ENCODE measurements at regions of chr19 and their contacts with region 1.

Region 1: DNA sequence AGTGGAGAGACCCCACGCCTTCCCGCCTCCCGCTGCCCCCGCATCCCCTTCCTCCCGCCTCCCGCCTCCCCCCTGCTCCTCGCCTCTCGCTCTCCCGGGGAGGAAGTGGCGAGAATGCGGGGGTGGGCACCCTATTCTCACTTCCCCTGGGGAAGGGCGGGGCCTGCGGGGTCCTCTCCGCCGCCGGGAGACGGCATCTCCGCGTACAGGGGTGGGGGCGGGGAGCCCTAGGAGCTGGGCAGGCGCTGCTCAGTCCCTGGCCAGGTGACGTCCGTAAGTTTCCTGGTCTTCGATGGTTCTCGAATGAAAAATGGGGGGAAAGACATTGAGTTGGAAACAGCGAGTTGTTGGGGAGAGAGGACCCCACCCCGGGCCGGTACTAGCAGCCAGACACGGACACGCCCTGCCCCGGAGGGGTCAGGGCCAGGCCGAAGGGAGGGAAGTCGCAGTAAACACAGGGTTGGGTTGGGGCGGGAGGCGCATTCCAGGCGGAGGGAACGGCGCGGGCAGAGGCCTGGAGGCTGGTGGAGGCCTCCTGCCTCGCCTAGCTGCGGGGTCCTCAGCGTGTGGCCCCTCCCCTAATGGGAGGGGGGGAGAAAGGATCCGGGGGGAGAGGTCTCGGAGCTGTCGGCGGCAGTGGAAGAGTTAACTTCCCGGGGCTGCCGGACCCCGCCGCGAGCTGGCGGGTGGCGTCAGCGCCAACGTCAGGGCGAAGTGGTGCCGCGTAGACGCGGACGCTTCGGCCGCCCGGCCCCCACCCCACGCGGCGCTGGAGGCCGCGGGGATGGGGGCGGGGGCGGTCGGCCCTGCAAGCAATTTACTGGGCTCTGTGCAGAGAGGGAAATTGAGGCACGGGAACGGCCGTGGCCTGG is 10.4 kb upstream of the JUND start:
- DNase-seq: peak; percentile 73
- ATAC-seq: peak; percentile 14
- H3K4me3 Mint-ChIP-seq: peak overlapping the region; percentile 83
- H3K27ac Mint-ChIP-seq: peak overlapping the region; percentile 99
- H3K4me1 Mint-ChIP-seq: peaks cover 48% of the 10 kb centered on the region
- H3K27me3 Mint-ChIP-seq: peaks cover 3% of the 10 kb centered on the region; the same call in 1 of the 2 replicates
- CTCF ChIP-seq: no peak

Region 2: GRCh38 chr19:18224525-18225354 is 67.1 kb before region 1 on chr19:
- CTCF ChIA-PET with region 1: interaction called, 5 read pairs
- POLR2A ChIA-PET with region 1: interaction called, 10 read pairs
- DNase-seq: peak; percentile 100
- ATAC-seq: peak; percentile 91
- H3K4me3 Mint-ChIP-seq: peak overlapping the region; percentile 92
- H3K27ac Mint-ChIP-seq: peak overlapping the region; percentile 100
- H3K4me1 Mint-ChIP-seq: peaks cover 30% of the 10 kb centered on the region
- H3K27me3 Mint-ChIP-seq: peaks cover 42% of the 10 kb centered on the region
- CTCF ChIP-seq: no peak

Region 3: DNA sequence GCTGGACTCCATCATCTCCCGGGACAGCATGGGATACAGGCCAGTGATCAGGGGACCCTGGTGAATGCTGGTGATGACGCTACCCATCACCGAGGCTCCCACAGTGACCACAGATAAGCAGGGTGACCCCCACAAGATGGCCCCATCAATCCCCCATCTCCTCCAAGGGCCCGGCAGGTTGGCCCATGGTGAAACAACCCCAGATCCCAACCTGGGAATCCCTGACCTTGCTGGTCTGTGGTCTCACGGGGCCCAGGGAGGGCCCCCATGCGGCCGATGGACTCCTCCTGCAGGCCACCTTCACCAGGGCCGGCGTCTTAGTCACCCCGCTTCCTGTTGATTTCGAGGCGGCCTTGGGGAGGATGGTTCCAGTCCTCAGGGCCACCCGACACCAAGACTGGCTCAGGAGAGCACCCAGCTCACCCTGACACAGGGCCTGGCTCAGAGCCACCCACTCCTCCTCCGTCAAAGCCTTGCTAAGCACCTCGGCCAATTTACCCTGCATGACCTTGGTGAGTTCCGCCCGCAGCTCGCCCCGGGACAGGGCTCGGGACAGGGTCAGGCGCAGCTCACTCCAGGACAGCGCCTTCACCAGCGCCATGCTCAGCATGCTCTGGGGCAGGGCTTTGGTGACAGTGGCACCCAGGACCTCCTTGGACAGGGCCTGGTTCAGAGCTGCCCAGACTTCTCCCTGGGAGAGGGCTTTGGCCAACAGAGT is 27.5 kb before region 1 on chr19:
- CTCF ChIA-PET with region 1: no interaction called
- POLR2A ChIA-PET with region 1: no interaction called
- DNase-seq: no peak
- ATAC-seq: no peak
- H3K4me3 Mint-ChIP-seq: no peak overlapping the region
- H3K27ac Mint-ChIP-seq: no peak overlapping the region
- H3K4me1 Mint-ChIP-seq: no peaks in the 10 kb centered on the region
- H3K27me3 Mint-ChIP-seq: peaks cover 3% of the 10 kb centered on the region; the same call in 1 of the 2 replicates
- CTCF ChIP-seq: no peak

Region 4: GRCh38 chr19:18304458-18305310 is 12.9 kb after region 1 on chr19:
- CTCF ChIA-PET with region 1: interaction called, 12 read pairs
- POLR2A ChIA-PET with region 1: interaction called, 18 read pairs
- DNase-seq: peak; percentile 45
- ATAC-seq: peak; percentile 46
- H3K4me3 Mint-ChIP-seq: peak overlapping the region; percentile 59
- H3K27ac Mint-ChIP-seq: peak overlapping the region; percentile 67
- H3K4me1 Mint-ChIP-seq: peaks cover 39% of the 10 kb centered on the region
- H3K27me3 Mint-ChIP-seq: no peaks in the 10 kb centered on the region
- CTCF ChIP-seq: no peak

Region 5: GRCh38 chr19:18322759-18323460 is 31.1 kb after region 1 on chr19 and contains the start of gene LSM4:
- CTCF ChIA-PET with region 1: interaction called, 35 read pairs
- POLR2A ChIA-PET with region 1: interaction called, 17 read pairs
- DNase-seq: peak; percentile 100
- ATAC-seq: peak; percentile 93
- H3K4me3 Mint-ChIP-seq: peak within 1 kb of the TSS; percentile 86
- H3K27ac Mint-ChIP-seq: peak within 1 kb of the TSS; percentile 100
- H3K4me1 Mint-ChIP-seq: peaks cover 42% of the 10 kb centered on the region
- H3K27me3 Mint-ChIP-seq: no peaks in the 10 kb centered on the region; the same call in 1 of the 2 replicates
- CTCF ChIP-seq: no peak
- total RNA-seq, gene LSM4: 373 to 434 TPM (median 409 TPM) in 3 replicates

Measured in WTC11 (cell line).